Activated CD4-positive, alpha-beta T cell treated with anti-CD3 and anti-CD28 coated beads for 36 hours (primary cell): ENCODE measurements at regions of chr11 and their contacts with region 1.

Region 1: DNA sequence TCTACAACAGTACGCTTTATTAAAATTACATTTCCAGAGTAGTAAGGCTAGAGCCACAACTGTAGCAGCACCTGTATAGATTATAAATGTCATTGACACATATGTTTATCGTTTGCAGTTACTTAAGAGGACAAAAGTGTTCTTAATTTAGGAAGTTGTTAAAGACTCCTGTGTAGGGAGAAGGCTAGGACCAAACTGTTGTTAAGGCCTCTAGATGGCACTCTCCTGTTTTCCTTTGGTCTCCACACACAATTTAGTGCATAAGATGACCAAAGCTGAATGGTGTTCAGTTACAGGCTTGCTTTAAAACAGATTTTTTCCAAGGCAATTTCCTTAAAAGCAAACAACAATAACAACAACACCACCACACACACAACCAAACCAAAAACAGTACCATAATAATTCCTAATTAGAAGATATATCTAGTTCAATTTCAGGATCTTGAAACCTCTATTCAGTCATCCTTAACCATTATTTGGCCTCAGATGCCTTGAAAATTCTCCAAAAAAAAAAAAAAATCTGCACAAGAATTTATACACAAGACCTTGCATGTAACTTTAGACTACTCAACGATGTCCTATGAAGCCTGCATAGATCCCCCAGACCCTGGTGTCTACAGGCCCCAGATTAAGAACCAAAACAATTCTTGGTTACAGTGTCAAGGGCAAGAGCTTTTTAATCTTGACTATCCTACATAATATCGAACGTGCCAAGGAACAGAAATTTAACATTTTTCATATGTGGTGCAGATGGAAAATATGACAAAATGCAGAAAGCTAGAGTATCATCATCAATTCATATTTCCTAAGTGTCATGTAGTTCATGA is 42.6 kb upstream of the APOA1 start:
- DNase-seq: no peak
- ATAC-seq: peak; percentile 65
- H3K4me3 Mint-ChIP-seq: no peak overlapping the region
- H3K27ac Mint-ChIP-seq: no peak overlapping the region
- H3K4me1 Mint-ChIP-seq: peaks cover 22% of the 10 kb centered on the region
- H3K27me3 Mint-ChIP-seq: no peaks in the 10 kb centered on the region

Region 2: GRCh38 chr11:116890193-116890592 is 10.2 kb after region 1 on chr11:
- CTCF ChIA-PET with region 1: interaction called, 22 read pairs
- POLR2A ChIA-PET with region 1: no interaction called
- intact Hi-C with region 1: no loop called
- DNase-seq: peak; percentile 32
- ATAC-seq: peak; percentile 93
- H3K4me3 Mint-ChIP-seq: no peak overlapping the region
- H3K27ac Mint-ChIP-seq: peak overlapping the region; percentile 80
- H3K4me1 Mint-ChIP-seq: peaks cover 19% of the 10 kb centered on the region
- H3K27me3 Mint-ChIP-seq: no peaks in the 10 kb centered on the region

Region 3: GRCh38 chr11:116911976-116912734 is 32.1 kb after region 1 on chr11:
- CTCF ChIA-PET with region 1: interaction called, 12 read pairs
- POLR2A ChIA-PET with region 1: no interaction called
- intact Hi-C with region 1: no loop called
- DNase-seq: no peak
- ATAC-seq: no peak
- H3K4me3 Mint-ChIP-seq: no peak overlapping the region
- H3K27ac Mint-ChIP-seq: no peak overlapping the region
- H3K4me1 Mint-ChIP-seq: peaks cover 20% of the 10 kb centered on the region
- H3K27me3 Mint-ChIP-seq: no peaks in the 10 kb centered on the region

Region 4: GRCh38 chr11:117020287-117020686 is 140.3 kb after region 1 on chr11:
- CTCF ChIA-PET with region 1: no interaction called
- POLR2A ChIA-PET with region 1: no interaction called
- intact Hi-C with region 1: loop called in 1 of 2 experiments (anchors 5 kb)
- DNase-seq: peak; percentile 62
- ATAC-seq: peak; percentile 14
- H3K4me3 Mint-ChIP-seq: no peak overlapping the region
- H3K27ac Mint-ChIP-seq: no peak overlapping the region
- H3K4me1 Mint-ChIP-seq: peaks cover 60% of the 10 kb centered on the region
- H3K27me3 Mint-ChIP-seq: no peaks in the 10 kb centered on the region

Region 5: GRCh38 chr11:117045196-117045595 is 165.2 kb after region 1 on chr11:
- CTCF ChIA-PET with region 1: no interaction called
- POLR2A ChIA-PET with region 1: no interaction called
- intact Hi-C with region 1: no loop called
- DNase-seq: no peak
- ATAC-seq: no peak
- H3K4me3 Mint-ChIP-seq: no peak overlapping the region
- H3K27ac Mint-ChIP-seq: peak overlapping the region; percentile 47
- H3K4me1 Mint-ChIP-seq: peaks cover 47% of the 10 kb centered on the region
- H3K27me3 Mint-ChIP-seq: no peaks in the 10 kb centered on the region

Region 6: DNA sequence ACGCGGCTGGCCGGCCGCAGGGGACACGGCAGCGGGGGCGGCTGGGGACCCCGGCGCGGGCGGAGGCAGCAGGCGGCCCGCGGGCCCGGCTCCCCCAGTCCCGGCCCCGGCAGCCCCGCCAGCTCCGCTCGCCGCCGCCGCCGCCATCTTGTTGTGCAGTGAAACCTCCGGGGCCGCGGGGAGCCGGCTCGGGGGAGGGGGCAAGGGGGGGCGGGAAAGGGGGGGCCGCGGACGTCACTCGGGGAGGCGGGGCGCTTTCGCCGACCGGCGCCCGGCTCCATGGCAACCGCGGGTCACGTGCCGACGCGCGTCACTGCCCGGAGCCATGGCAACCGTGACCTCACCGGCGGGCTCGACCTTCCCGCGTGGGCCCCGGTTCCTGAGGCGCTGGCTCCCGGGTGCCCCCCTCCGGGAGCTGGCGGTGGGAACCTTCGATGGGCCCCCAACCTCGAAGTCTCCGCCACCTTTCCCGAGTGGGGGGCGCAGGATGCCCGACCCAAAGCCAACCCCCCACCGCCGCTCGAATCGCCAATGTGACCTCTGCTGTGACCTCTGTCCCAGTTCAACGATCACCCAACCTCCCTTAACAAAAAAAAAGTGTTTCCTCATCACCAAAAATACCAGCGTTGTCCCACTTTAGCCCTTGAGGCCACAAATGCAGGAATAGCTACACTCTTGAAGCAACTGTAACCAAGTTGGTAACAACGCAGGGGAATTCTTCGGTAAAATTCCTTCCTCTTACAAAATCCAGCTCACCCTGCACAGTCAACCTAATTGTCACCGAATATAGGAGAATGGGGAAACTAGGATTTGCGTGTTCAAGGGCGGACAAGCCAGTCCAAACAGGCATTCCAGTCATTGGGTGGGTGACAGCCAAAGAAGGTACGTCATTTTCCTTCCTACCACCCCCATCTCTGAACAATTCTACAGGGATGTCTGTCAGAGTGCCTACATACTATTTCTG is 218.5 kb after region 1 on chr11 and contains the start of gene SIK3:
- CTCF ChIA-PET with region 1: interaction called, 8 read pairs
- POLR2A ChIA-PET with region 1: no interaction called
- intact Hi-C with region 1: loop called in 1 of 2 experiments (anchors 1 kb)
- DNase-seq: peak; percentile 96
- ATAC-seq: peak; percentile 71
- H3K4me3 Mint-ChIP-seq: peak within 1 kb of the TSS; percentile 93
- H3K27ac Mint-ChIP-seq: peak within 1 kb of the TSS; percentile 93
- H3K4me1 Mint-ChIP-seq: peaks cover 46% of the 10 kb centered on the region
- H3K27me3 Mint-ChIP-seq: no peaks in the 10 kb centered on the region
- total RNA-seq, gene SIK3: 23.6 to 25.3 TPM

Region 7: GRCh38 chr11:117226388-117227385 is 346.7 kb after region 1 on chr11:
- CTCF ChIA-PET with region 1: interaction called, 3 read pairs
- POLR2A ChIA-PET with region 1: no interaction called
- intact Hi-C with region 1: loop called in 1 of 2 experiments (anchors 1 kb)
- DNase-seq: peak; percentile 59
- ATAC-seq: peak; percentile 52
- H3K4me3 Mint-ChIP-seq: no peak overlapping the region
- H3K27ac Mint-ChIP-seq: peak overlapping the region; percentile 25
- H3K4me1 Mint-ChIP-seq: peaks cover 30% of the 10 kb centered on the region
- H3K27me3 Mint-ChIP-seq: no peaks in the 10 kb centered on the region